ENCODE measurements at regions of chr6 and their contacts with region 1.

Region 1: GRCh38 chr6:13413900-13414555 is 73.4 kb downstream of the GFOD1 start:
- DNase-seq: peak; percentile 60 to 86
- ATAC-seq: peak; percentile 84 to 95 (median 90)
- H3K4me3 ChIP-seq: no peak overlapping the region
- H3K27ac ChIP-seq: peak overlapping the region; percentile 77
- H3K4me1 ChIP-seq: peaks cover 81% of the 10 kb centered on the region
- H3K27me3 ChIP-seq: no peaks in the 10 kb centered on the region
- CTCF ChIP-seq: peak; percentile 35

Region 2: GRCh38 chr6:13500264-13500663 is 86.2 kb after region 1 on chr6:
- intact Hi-C with region 1: no loop called
- DNase-seq: no peak
- ATAC-seq: no peak
- H3K4me3 ChIP-seq: no peak overlapping the region
- H3K27ac ChIP-seq: no peak overlapping the region
- H3K4me1 ChIP-seq: no peaks in the 10 kb centered on the region
- H3K27me3 ChIP-seq: no peaks in the 10 kb centered on the region
- CTCF ChIP-seq: no peak

Region 3: GRCh38 chr6:13538084-13538483 is 124.1 kb after region 1 on chr6:
- intact Hi-C with region 1: loop called (anchors 5 kb)
- DNase-seq: no peak
- ATAC-seq: peak; percentile 70 to 92 (median 78)
- H3K4me3 ChIP-seq: no peak overlapping the region
- H3K27ac ChIP-seq: no peak overlapping the region
- H3K4me1 ChIP-seq: no peaks in the 10 kb centered on the region
- H3K27me3 ChIP-seq: no peaks in the 10 kb centered on the region
- CTCF ChIP-seq: peak; percentile 62

Measured in psoas muscle (tissue), 8 donors.